ENCODE measurements at regions of chr9 and their contacts with region 1.

Region 1: DNA sequence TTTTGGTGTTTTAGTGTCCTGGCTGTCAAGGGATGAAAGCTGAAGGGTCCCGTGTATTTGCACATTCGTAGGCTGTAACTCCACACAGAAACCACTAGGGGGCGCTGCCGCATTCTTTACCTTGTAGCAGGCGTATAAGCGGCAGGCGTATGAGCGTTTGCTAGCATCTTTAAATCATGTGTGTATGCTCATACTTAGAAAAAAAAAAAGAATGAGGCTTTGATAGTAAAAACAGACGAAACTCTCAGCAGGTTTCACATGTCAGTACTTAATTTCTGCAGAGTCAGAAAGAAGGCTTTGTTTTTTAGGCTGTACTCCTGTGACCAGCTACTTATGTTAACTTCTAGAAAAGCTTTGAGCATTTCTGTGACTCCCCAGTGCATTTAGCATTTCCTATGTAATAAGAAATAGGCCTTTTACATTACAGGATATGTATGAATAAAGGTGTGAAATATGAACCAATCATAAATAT is 218.8 kb upstream of the ADAMTSL1 start:
- DNase-seq: peak; percentile 48
- ATAC-seq: peak; percentile 83
- H3K4me3 ChIP-seq: no peak overlapping the region
- H3K27ac ChIP-seq: no peak overlapping the region
- H3K4me1 ChIP-seq: no peaks in the 10 kb centered on the region
- H3K27me3 ChIP-seq: no peaks in the 10 kb centered on the region
- CTCF ChIP-seq: peak; percentile 53 to 89 (median 82); a peak in 5 of 6 replicates
- POLR2A ChIP-seq: no peak
- RAD21 ChIP-seq: peak; percentile 68

Region 2: GRCh38 chr9:18208154-18209059 is 46.8 kb before region 1 on chr9:
- CTCF ChIA-PET with region 1: no interaction called
- POLR2A ChIA-PET with region 1: no interaction called
- RAD21 ChIA-PET with region 1: no interaction called
- intact Hi-C with region 1: no loop called
- DNase-seq: no peak
- ATAC-seq: no peak
- H3K4me3 ChIP-seq: no peak overlapping the region
- H3K27ac ChIP-seq: no peak overlapping the region
- H3K4me1 ChIP-seq: no peaks in the 10 kb centered on the region
- H3K27me3 ChIP-seq: no peaks in the 10 kb centered on the region
- CTCF ChIP-seq: peak in 2 of 3 experiments; percentile 6 to 31; a peak in 2 of 6 replicates
- POLR2A ChIP-seq: no peak
- RAD21 ChIP-seq: peak; percentile 19; the same call in 1 of the 2 replicates

Region 3: GRCh38 chr9:18507151-18507550 is 252.0 kb after region 1 on chr9:
- CTCF ChIA-PET with region 1: no interaction called
- POLR2A ChIA-PET with region 1: no interaction called
- RAD21 ChIA-PET with region 1: interaction called in 1 of 2 experiments, 11 read pairs
- intact Hi-C with region 1: no loop called
- DNase-seq: no peak
- ATAC-seq: no peak
- H3K4me3 ChIP-seq: no peak overlapping the region
- H3K27ac ChIP-seq: no peak overlapping the region
- H3K4me1 ChIP-seq: no peaks in the 10 kb centered on the region
- H3K27me3 ChIP-seq: no peaks in the 10 kb centered on the region
- CTCF ChIP-seq: no peak
- POLR2A ChIP-seq: no peak
- RAD21 ChIP-seq: no peak

Region 4: DNA sequence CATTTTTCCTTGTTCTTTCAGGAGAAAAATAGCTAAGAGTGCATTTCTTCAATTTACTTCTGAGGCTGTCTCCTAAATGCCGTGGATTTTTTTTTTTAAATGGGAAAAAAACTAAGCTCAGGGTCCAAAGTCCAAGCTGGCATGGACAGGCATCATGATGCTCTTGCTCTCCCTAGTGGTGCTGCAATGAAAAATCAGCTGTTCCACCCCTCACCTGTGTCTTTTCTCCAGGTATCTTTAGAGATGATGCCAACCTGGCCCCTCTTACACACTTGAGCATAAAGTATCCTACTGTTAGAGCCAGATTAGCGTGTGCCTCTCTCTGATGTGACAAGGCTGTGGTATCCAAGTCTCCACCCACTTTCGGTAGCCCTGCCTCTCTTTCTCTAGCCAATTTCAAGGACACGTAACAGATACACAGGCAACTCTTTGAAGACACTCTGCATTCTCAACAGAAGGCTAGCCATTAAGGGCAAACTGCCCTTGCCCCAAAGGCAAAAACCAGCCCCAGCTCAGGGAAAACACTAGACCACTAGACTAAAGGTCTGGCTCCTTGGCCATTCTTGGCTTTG is 569.0 kb after region 1 on chr9:
- CTCF ChIA-PET with region 1: interaction called, 8 read pairs
- POLR2A ChIA-PET with region 1: no interaction called
- RAD21 ChIA-PET with region 1: no interaction called
- intact Hi-C with region 1: loop called (anchors 1 kb)
- DNase-seq: no peak
- ATAC-seq: peak; percentile 78
- H3K4me3 ChIP-seq: no peak overlapping the region
- H3K27ac ChIP-seq: no peak overlapping the region
- H3K4me1 ChIP-seq: peaks cover 5 to 9% of the 10 kb centered on the region in 2 experiments; a peak in 3 of 4 replicates
- H3K27me3 ChIP-seq: 0 out of 2 replicates have a peak, but pooled peaks cover 5% of the 10 kb centered on the region
- CTCF ChIP-seq: peak; percentile 14 to 49 (median 49); a peak in 4 of 6 replicates
- POLR2A ChIP-seq: no peak
- RAD21 ChIP-seq: peak; percentile 60

Region 5: GRCh38 chr9:19028835-19029451 is 773.7 kb after region 1 on chr9:
- CTCF ChIA-PET with region 1: no interaction called
- POLR2A ChIA-PET with region 1: no interaction called
- RAD21 ChIA-PET with region 1: no interaction called
- intact Hi-C with region 1: loop called (anchors 2 kb)
- DNase-seq: peak; percentile 52
- ATAC-seq: peak; percentile 92
- H3K4me3 ChIP-seq: no peak overlapping the region
- H3K27ac ChIP-seq: no peak overlapping the region
- H3K4me1 ChIP-seq: no peaks in the 10 kb centered on the region
- H3K27me3 ChIP-seq: no peaks in the 10 kb centered on the region
- CTCF ChIP-seq: peak; percentile 55 to 64 (median 61); a peak in 5 of 6 replicates
- POLR2A ChIP-seq: no peak
- RAD21 ChIP-seq: peak; percentile 72

Measured in HCT116 (cell line).